A549 (cell line): ENCODE measurements at regions of chr14 and their contacts with region 1.

Region 1: GRCh38 chr14:36070031-36070719 is 106.3 kb downstream of the PTCSC3 start:
- DNase-seq: peak; percentile 57 to 82
- ATAC-seq: peak; percentile 95 to 96
- H3K4me3 ChIP-seq: no peak overlapping the region
- H3K27ac ChIP-seq: no peak overlapping the region
- H3K4me1 ChIP-seq: peaks cover 16% of the 10 kb centered on the region
- CTCF ChIP-seq: peak; percentile 91
- EP300 ChIP-seq: no peak
- POLR2A ChIP-seq: no peak
- RAD21 ChIP-seq: peak; percentile 94 to 96

Region 2: GRCh38 chr14:35730871-35731270 is 339.3 kb before region 1 on chr14:
- CTCF ChIA-PET with region 1: no interaction called
- POLR2A ChIA-PET with region 1: no interaction called
- DNase-seq: no peak
- ATAC-seq: no peak
- H3K4me3 ChIP-seq: no peak overlapping the region
- H3K27ac ChIP-seq: no peak overlapping the region
- H3K4me1 ChIP-seq: no peaks in the 10 kb centered on the region
- CTCF ChIP-seq: no peak
- EP300 ChIP-seq: no peak
- POLR2A ChIP-seq: no peak
- RAD21 ChIP-seq: no peak

Region 3: DNA sequence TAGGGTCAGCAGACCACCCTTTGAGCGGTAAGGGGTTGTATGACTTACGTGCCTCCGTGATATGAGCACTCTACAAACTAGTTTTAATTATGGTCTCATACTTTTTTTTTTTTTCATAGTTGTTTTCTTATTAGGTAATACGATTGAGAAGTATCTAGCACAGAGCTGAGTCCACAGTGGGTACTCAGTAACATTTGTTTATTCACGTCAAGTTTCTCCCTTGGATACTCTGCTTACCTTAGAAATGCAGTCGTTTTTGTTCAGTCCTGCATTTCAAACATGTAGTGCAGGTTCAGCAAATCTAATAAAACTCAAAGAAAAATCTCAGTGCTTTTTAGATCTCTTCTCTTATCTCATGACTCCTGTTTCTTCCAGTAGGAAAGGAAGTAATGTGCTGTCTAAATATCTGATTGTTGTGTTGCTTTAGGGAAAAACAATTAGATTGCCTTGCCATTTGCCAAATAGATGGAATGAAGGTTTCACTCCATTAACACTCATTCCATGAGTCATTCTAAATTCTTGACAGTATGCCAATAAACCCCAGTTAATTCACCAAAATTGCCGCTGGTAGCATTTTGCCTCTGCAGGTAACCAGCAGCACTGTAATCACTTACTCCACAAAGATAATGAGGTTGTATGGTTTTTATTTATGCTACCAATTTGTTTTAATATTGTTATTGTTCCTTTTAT is 12.6 kb before region 1 on chr14:
- CTCF ChIA-PET with region 1: interaction called, 35 read pairs
- POLR2A ChIA-PET with region 1: no interaction called
- DNase-seq: no peak
- ATAC-seq: no peak
- H3K4me3 ChIP-seq: no peak overlapping the region
- H3K27ac ChIP-seq: no peak overlapping the region
- H3K4me1 ChIP-seq: peaks cover 4% of the 10 kb centered on the region; the same call in 1 of the 3 replicates
- CTCF ChIP-seq: no peak
- EP300 ChIP-seq: no peak
- POLR2A ChIP-seq: no peak
- RAD21 ChIP-seq: no peak

Region 4: DNA sequence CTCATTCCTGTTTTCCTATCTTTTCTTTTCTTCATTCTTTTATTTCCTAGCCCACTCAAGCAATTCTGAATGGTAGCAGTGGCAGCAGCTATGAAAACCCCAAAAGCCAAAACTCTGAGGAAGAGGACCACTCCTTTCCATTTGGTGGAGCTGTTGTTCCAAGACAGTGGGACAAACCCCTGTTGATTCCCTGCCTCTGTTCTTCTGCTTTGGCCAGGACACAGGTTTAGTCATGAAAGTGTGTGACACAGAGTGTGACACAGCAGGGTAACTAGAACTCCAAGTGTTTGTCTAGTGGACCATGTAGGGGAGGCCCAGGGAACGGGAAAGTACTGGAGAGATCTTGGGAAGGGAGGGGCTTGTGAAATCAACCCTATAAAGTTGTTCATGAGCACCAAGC is 35.2 kb after region 1 on chr14:
- CTCF ChIA-PET with region 1: interaction called, 12 read pairs
- POLR2A ChIA-PET with region 1: no interaction called
- DNase-seq: peak in 1 of 2 experiments; percentile 14
- ATAC-seq: peak in 1 of 2 experiments; percentile 53; a peak in 2 of 6 replicates
- H3K4me3 ChIP-seq: no peak overlapping the region
- H3K27ac ChIP-seq: no peak overlapping the region
- H3K4me1 ChIP-seq: no peaks in the 10 kb centered on the region
- CTCF ChIP-seq: no peak
- EP300 ChIP-seq: no peak
- POLR2A ChIP-seq: no peak
- RAD21 ChIP-seq: peak; percentile 30 to 55; a peak in 3 of 5 replicates

Region 5: DNA sequence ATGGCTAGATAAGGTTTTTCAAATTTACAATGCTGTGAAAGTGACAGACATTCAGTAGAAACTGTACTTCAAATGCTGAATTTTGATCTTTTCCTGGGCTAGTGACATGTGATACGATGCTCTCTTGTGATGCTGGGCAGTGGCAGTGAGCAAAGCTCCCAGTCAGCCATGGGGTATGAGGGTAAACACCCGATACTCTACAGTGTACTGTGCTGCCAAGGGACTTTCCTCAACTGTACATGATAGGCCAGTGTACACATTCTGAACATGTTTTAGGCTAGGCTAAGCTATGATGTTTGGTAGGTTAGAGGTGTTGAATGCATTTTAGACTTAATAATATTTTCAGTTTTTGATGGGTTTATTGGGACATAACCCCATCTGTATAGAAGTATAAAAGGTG is 232.6 kb after region 1 on chr14:
- CTCF ChIA-PET with region 1: interaction called, 34 read pairs
- POLR2A ChIA-PET with region 1: no interaction called
- DNase-seq: no peak
- ATAC-seq: peak in 1 of 2 experiments; percentile 30; a peak in 1 of 6 replicates
- H3K4me3 ChIP-seq: no peak overlapping the region
- H3K27ac ChIP-seq: no peak overlapping the region
- H3K4me1 ChIP-seq: peaks cover 11% of the 10 kb centered on the region; the same call in 2 of the 3 replicates
- CTCF ChIP-seq: no peak
- EP300 ChIP-seq: no peak
- POLR2A ChIP-seq: no peak
- RAD21 ChIP-seq: no peak

Region 6: DNA sequence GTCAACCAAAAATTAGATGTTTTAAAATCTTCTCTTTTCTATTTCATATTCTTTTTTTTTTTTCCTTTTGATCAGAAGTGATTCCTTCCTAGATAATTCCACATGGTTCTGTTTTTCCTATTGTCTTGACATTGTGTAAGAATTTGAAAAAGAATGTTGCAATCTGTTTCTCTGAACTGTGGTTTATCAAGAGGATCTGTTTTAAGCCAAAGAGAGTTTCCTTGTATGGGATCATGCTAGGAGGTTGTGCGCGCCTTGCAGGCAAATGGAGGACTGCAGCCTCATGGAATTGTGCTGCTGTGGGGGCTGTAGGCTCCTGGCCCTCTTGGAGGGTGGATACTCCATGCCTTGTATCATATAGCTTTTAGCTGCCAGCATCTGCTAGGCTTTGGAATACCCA is 293.5 kb after region 1 on chr14:
- CTCF ChIA-PET with region 1: interaction called, 12 read pairs
- POLR2A ChIA-PET with region 1: no interaction called
- DNase-seq: no peak
- ATAC-seq: no peak
- H3K4me3 ChIP-seq: no peak overlapping the region
- H3K27ac ChIP-seq: no peak overlapping the region
- H3K4me1 ChIP-seq: no peaks in the 10 kb centered on the region
- CTCF ChIP-seq: no peak
- EP300 ChIP-seq: no peak
- POLR2A ChIP-seq: no peak
- RAD21 ChIP-seq: no peak

Region 7: GRCh38 chr14:36513451-36514277 is 443.5 kb after region 1 on chr14:
- CTCF ChIA-PET with region 1: interaction called, 12 read pairs
- POLR2A ChIA-PET with region 1: no interaction called
- DNase-seq: no peak
- ATAC-seq: no peak
- H3K4me3 ChIP-seq: no peak overlapping the region
- H3K27ac ChIP-seq: no peak overlapping the region
- H3K4me1 ChIP-seq: no peaks in the 10 kb centered on the region
- CTCF ChIP-seq: no peak
- EP300 ChIP-seq: no peak
- POLR2A ChIP-seq: no peak
- RAD21 ChIP-seq: no peak

Region 8: GRCh38 chr14:36604757-36605505 is 534.8 kb after region 1 on chr14:
- CTCF ChIA-PET with region 1: interaction called, 22 read pairs
- POLR2A ChIA-PET with region 1: interaction called, 3 read pairs
- DNase-seq: peak; percentile 71 to 80
- ATAC-seq: peak; percentile 80 to 91
- H3K4me3 ChIP-seq: no peak overlapping the region
- H3K27ac ChIP-seq: no peak overlapping the region
- H3K4me1 ChIP-seq: 0 out of 3 replicates have a peak, but pooled peaks cover 3% of the 10 kb centered on the region
- CTCF ChIP-seq: peak; percentile 82
- EP300 ChIP-seq: no peak
- POLR2A ChIP-seq: no peak
- RAD21 ChIP-seq: peak; percentile 83 to 85